Body of pancreas (tissue), 4 donors: ENCODE measurements at regions of chr9 and their contacts with region 1.

Region 1: GRCh38 chr9:37994639-37995347 is 74.2 kb downstream of the SHB start:
- DNase-seq: peak; percentile 38 to 81 (median 68)
- ATAC-seq: peak; percentile 47
- H3K4me3 ChIP-seq: no peak overlapping the region
- H3K27ac ChIP-seq: peak overlapping the region; percentile 42 to 66 (median 50)
- H3K4me1 ChIP-seq: peaks cover 38% of the 10 kb centered on the region
- H3K27me3 ChIP-seq: no peaks in the 10 kb centered on the region
- CTCF ChIP-seq: peak in 1 of 7 experiments; percentile 4
- POLR2A ChIP-seq: peak in 1 of 3 donors; percentile 16

Region 2: GRCh38 chr9:37944671-37945481 is 49.9 kb before region 1 on chr9:
- intact Hi-C with region 1: loop called (anchors 5 kb)
- DNase-seq: no peak
- ATAC-seq: no peak
- H3K4me3 ChIP-seq: no peak overlapping the region
- H3K27ac ChIP-seq: peak overlapping the region in 2 of 4 donors; percentile 45 to 55
- H3K4me1 ChIP-seq: peaks cover 30% of the 10 kb centered on the region
- H3K27me3 ChIP-seq: no peaks in the 10 kb centered on the region
- CTCF ChIP-seq: no peak
- POLR2A ChIP-seq: no peak